ENCODE measurements at regions of chr6 and their contacts with region 1.

Region 1: GRCh38 chr6:121055572-121056163 is 278.6 kb downstream of the TBC1D32 start:
- DNase-seq: no peak
- H3K4me3 ChIP-seq: no peak overlapping the region
- H3K27ac ChIP-seq: no peak overlapping the region
- H3K4me1 ChIP-seq: no peaks in the 10 kb centered on the region
- H3K27me3 ChIP-seq: no peaks in the 10 kb centered on the region
- CTCF ChIP-seq: peak; percentile 56 to 67 (median 64)
- EP300 ChIP-seq: no peak
- POLR2A ChIP-seq: no peak

Region 2: GRCh38 chr6:121008553-121008952 is 47.1 kb before region 1 on chr6:
- in situ Hi-C with region 1: no loop called
- intact Hi-C with region 1: loop called (anchors 1 kb)
- DNase-seq: no peak
- H3K4me3 ChIP-seq: no peak overlapping the region
- H3K27ac ChIP-seq: no peak overlapping the region
- H3K4me1 ChIP-seq: no peaks in the 10 kb centered on the region
- H3K27me3 ChIP-seq: no peaks in the 10 kb centered on the region
- CTCF ChIP-seq: no peak
- EP300 ChIP-seq: no peak
- POLR2A ChIP-seq: no peak

Region 3: GRCh38 chr6:121222656-121223055 is 167.0 kb after region 1 on chr6:
- in situ Hi-C with region 1: loop called in 1 of 4 experiments (anchors 25 kb)
- intact Hi-C with region 1: no loop called
- DNase-seq: no peak
- H3K4me3 ChIP-seq: no peak overlapping the region
- H3K27ac ChIP-seq: no peak overlapping the region
- H3K4me1 ChIP-seq: no peaks in the 10 kb centered on the region
- H3K27me3 ChIP-seq: no peaks in the 10 kb centered on the region
- CTCF ChIP-seq: peak in 1 of 5 experiments; percentile 28
- EP300 ChIP-seq: no peak
- POLR2A ChIP-seq: no peak

Region 4: GRCh38 chr6:121382467-121383121 is 326.9 kb after region 1 on chr6:
- in situ Hi-C with region 1: loop called in 2 of 4 experiments (anchors 25 kb)
- intact Hi-C with region 1: no loop called
- DNase-seq: peak; percentile 87
- H3K4me3 ChIP-seq: no peak overlapping the region
- H3K27ac ChIP-seq: peak overlapping the region; percentile 62 to 73 (median 64)
- H3K4me1 ChIP-seq: peaks cover 0 to 15% (median 6%) of the 10 kb centered on the region in 4 donors
- H3K27me3 ChIP-seq: no peaks in the 10 kb centered on the region
- CTCF ChIP-seq: peak in 1 of 5 experiments; percentile 21
- EP300 ChIP-seq: no peak
- POLR2A ChIP-seq: no peak

Region 5: GRCh38 chr6:121413879-121414278 is 358.2 kb after region 1 on chr6:
- in situ Hi-C with region 1: loop called in 2 of 4 experiments (anchors 25 kb)
- intact Hi-C with region 1: no loop called
- DNase-seq: no peak
- H3K4me3 ChIP-seq: no peak overlapping the region
- H3K27ac ChIP-seq: no peak overlapping the region
- H3K4me1 ChIP-seq: no peaks in the 10 kb centered on the region
- H3K27me3 ChIP-seq: no peaks in the 10 kb centered on the region
- CTCF ChIP-seq: no peak
- EP300 ChIP-seq: no peak
- POLR2A ChIP-seq: no peak

Measured in transverse colon (tissue), 4 donors.